ENCODE measurements at regions of chr3 and their contacts with region 1.

Region 1: DNA sequence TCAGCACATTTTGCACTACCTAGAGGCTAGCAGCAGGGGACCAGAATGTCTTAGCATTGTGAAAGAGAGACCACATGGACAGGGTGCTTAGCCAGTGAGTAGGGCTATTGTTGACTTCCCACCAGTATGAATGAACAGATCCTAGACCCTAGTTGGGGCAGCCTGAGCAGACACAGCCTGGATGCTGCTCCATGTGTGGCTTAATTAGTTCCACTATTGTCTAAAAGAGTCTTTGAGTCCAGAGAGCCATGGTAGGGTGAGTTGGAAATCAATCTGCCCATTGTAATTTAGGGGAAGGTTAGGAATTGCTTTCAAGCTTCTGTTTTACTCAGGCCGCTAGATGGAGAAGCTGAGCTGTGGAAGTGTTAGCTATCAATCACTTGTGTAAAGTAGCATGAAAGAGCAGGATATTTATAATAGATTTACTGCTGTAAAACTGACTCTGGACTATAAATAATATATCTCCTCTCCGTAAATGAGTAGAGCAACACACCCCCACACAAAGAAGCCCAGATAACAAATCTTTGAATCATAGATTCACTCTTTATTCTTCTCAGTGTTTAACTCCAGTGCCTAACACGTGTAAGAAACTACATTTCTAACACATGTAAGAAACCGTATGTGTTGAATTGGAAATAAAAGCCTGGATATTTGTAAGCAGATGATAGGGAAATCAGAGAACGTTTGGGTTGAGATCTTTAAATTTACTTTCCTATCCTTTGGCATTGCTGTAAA is 4.1 kb upstream of the GCSAM start:
- H3K4me3 Mint-ChIP-seq: no peak overlapping the region
- H3K27ac Mint-ChIP-seq: peak overlapping the region; percentile 43
- H3K4me1 Mint-ChIP-seq: peaks cover 33% of the 10 kb centered on the region
- H3K27me3 Mint-ChIP-seq: no peaks in the 10 kb centered on the region

Region 2: GRCh38 chr3:112149136-112149535 is 12.0 kb after region 1 on chr3:
- intact Hi-C with region 1: no loop called
- H3K4me3 Mint-ChIP-seq: no peak overlapping the region
- H3K27ac Mint-ChIP-seq: no peak overlapping the region
- H3K4me1 Mint-ChIP-seq: no peaks in the 10 kb centered on the region
- H3K27me3 Mint-ChIP-seq: no peaks in the 10 kb centered on the region

Region 3: GRCh38 chr3:112531358-112531781 is 394.2 kb after region 1 on chr3:
- intact Hi-C with region 1: loop called (anchors 5 kb)
- H3K4me3 Mint-ChIP-seq: no peak overlapping the region
- H3K27ac Mint-ChIP-seq: no peak overlapping the region
- H3K4me1 Mint-ChIP-seq: no peaks in the 10 kb centered on the region
- H3K27me3 Mint-ChIP-seq: no peaks in the 10 kb centered on the region

Measured in dendritic cell treated with granulocyte-macrophage colony-stimulating factor and Interleukin-4, amounts not matched to agents 40 ng/mL and 50 ng/mL, for 4 days (primary cell).